CD4-positive, alpha-beta memory T cell (primary cell): ENCODE measurements at regions of chr1 and their contacts with region 1.

Region 1: GRCh38 chr1:111222308-111223125 is 5.0 kb upstream of the CHI3L2 start:
- DNase-seq: peak; percentile 63 to 75 (median 68)
- H3K4me3 ChIP-seq: peak overlapping the region; percentile 25 to 39
- H3K4me3 Mint-ChIP-seq: peak overlapping the region; percentile 79 to 95 (median 85)
- H3K27ac ChIP-seq: peak overlapping the region; percentile 54
- H3K27ac Mint-ChIP-seq: peak overlapping the region; percentile 89 to 100 (median 96)
- H3K4me1 ChIP-seq: peaks cover 98% of the 10 kb centered on the region
- H3K4me1 Mint-ChIP-seq: peaks cover 76 to 97% (median 89%) of the 10 kb centered on the region in 4 donors
- H3K27me3 ChIP-seq: no peaks in the 10 kb centered on the region
- H3K27me3 Mint-ChIP-seq: no peaks in the 10 kb centered on the region

Region 2: DNA sequence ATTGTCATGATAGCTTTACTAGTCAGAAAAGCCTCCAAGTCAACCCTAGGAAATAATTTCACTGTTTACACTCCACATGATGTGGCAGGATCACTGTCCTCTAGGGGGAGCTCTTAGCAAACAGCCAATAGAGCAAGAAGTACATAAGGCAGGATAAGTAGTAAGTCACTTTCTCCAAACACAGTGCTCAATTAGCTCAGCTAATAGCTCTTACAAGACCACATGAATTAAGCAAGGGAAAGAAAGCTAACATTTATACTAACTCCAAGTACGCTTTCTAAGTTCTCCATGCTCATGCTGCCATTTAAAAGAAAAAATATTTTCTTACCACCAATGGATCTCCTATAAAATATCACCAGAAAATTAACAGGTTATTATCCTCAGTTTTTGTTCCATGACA is 191.9 kb before region 1 on chr1:
- CTCF ChIA-PET with region 1: interaction called, 9 read pairs
- POLR2A ChIA-PET with region 1: interaction called, 6 read pairs
- intact Hi-C with region 1: loop called (anchors 2 kb)
- DNase-seq: peak; percentile 54 to 62 (median 59)
- H3K4me3 ChIP-seq: no peak overlapping the region
- H3K4me3 Mint-ChIP-seq: no peak overlapping the region
- H3K27ac ChIP-seq: no peak overlapping the region
- H3K27ac Mint-ChIP-seq: no peak overlapping the region
- H3K4me1 ChIP-seq: no peaks in the 10 kb centered on the region
- H3K4me1 Mint-ChIP-seq: no peaks in the 10 kb centered on the region
- H3K27me3 ChIP-seq: no peaks in the 10 kb centered on the region
- H3K27me3 Mint-ChIP-seq: peaks cover 5 to 12% of the 10 kb centered on the region in 2 donors

Region 3: GRCh38 chr1:111190651-111191451 is 31.7 kb before region 1 on chr1:
- CTCF ChIA-PET with region 1: interaction called, 623 read pairs
- POLR2A ChIA-PET with region 1: interaction called, 1,434 read pairs
- intact Hi-C with region 1: loop called (anchors 2 kb)
- DNase-seq: no peak
- H3K4me3 ChIP-seq: no peak overlapping the region
- H3K4me3 Mint-ChIP-seq: peak overlapping the region in 5 of 8 donors; percentile 1 to 77 (median 24)
- H3K27ac ChIP-seq: peak overlapping the region; percentile 27
- H3K27ac Mint-ChIP-seq: peak overlapping the region; percentile 62 to 97 (median 89)
- H3K4me1 ChIP-seq: peaks cover 100% of the 10 kb centered on the region
- H3K4me1 Mint-ChIP-seq: peaks cover 76 to 99% (median 88%) of the 10 kb centered on the region in 4 donors
- H3K27me3 ChIP-seq: no peaks in the 10 kb centered on the region
- H3K27me3 Mint-ChIP-seq: no peaks in the 10 kb centered on the region

Region 4: GRCh38 chr1:111334169-111334568 is 111.7 kb after region 1 on chr1:
- CTCF ChIA-PET with region 1: interaction called, 123 read pairs
- POLR2A ChIA-PET with region 1: interaction called, 12 read pairs
- intact Hi-C with region 1: loop called (anchors 1 kb)
- DNase-seq: peak; percentile 49 to 69 (median 68)
- H3K4me3 ChIP-seq: no peak overlapping the region
- H3K4me3 Mint-ChIP-seq: peak overlapping the region in 2 of 8 donors; percentile 24 to 45
- H3K27ac ChIP-seq: no peak overlapping the region
- H3K27ac Mint-ChIP-seq: peak overlapping the region in 3 of 7 donors; percentile 1 to 74 (median 3)
- H3K4me1 ChIP-seq: peaks cover 7% of the 10 kb centered on the region
- H3K4me1 Mint-ChIP-seq: peaks cover 2 to 12% (median 4%) of the 10 kb centered on the region in 4 donors
- H3K27me3 ChIP-seq: no peaks in the 10 kb centered on the region
- H3K27me3 Mint-ChIP-seq: no peaks in the 10 kb centered on the region

Region 5: GRCh38 chr1:111441573-111442192 is 219.2 kb after region 1 on chr1:
- CTCF ChIA-PET with region 1: interaction called, 19 read pairs
- POLR2A ChIA-PET with region 1: no interaction called
- intact Hi-C with region 1: loop called (anchors 1 kb)
- DNase-seq: peak; percentile 62 to 72 (median 64)
- H3K4me3 ChIP-seq: no peak overlapping the region
- H3K4me3 Mint-ChIP-seq: no peak overlapping the region
- H3K27ac ChIP-seq: peak overlapping the region; percentile 12
- H3K27ac Mint-ChIP-seq: peak overlapping the region; percentile 68 to 82 (median 77)
- H3K4me1 ChIP-seq: peaks cover 26% of the 10 kb centered on the region
- H3K4me1 Mint-ChIP-seq: peaks cover 16 to 44% (median 27%) of the 10 kb centered on the region in 4 donors
- H3K27me3 ChIP-seq: no peaks in the 10 kb centered on the region
- H3K27me3 Mint-ChIP-seq: no peaks in the 10 kb centered on the region

Region 6: GRCh38 chr1:111769517-111770146 is 547.1 kb after region 1 on chr1:
- CTCF ChIA-PET with region 1: no interaction called
- POLR2A ChIA-PET with region 1: no interaction called
- intact Hi-C with region 1: loop called (anchors 1 kb)
- DNase-seq: peak; percentile 54 to 64 (median 59)
- H3K4me3 ChIP-seq: no peak overlapping the region
- H3K4me3 Mint-ChIP-seq: no peak overlapping the region
- H3K27ac ChIP-seq: no peak overlapping the region
- H3K27ac Mint-ChIP-seq: peak overlapping the region in 5 of 7 donors; percentile 7 to 55 (median 38)
- H3K4me1 ChIP-seq: no peaks in the 10 kb centered on the region
- H3K4me1 Mint-ChIP-seq: peaks cover 0 to 3% (median under 1%) of the 10 kb centered on the region in 4 donors
- H3K27me3 ChIP-seq: no peaks in the 10 kb centered on the region
- H3K27me3 Mint-ChIP-seq: no peaks in the 10 kb centered on the region